H1 (cell line): ENCODE measurements at regions of chr1 and their contacts with region 1.

Region 1: GRCh38 chr1:44318097-44319088 is 36.7 kb downstream of the ERI3 start:
- DNase-seq: peak; percentile 54 to 74
- H3K4me3 ChIP-seq: no peak overlapping the region; a peak in 1 of 8 replicates
- H3K27ac ChIP-seq: no peak overlapping the region
- H3K4me1 ChIP-seq: peaks cover 7 to 18% (median 15%) of the 10 kb centered on the region in 4 experiments; a peak in 5 of 7 replicates
- H3K27me3 ChIP-seq: peaks cover 0 to 2% (median 0%) of the 10 kb centered on the region in 4 experiments; a peak in 1 of 7 replicates
- CTCF ChIP-seq: peak; percentile 45 to 82 (median 61)
- EP300 ChIP-seq: peak in 1 of 2 experiments; percentile 54; a peak in 1 of 3 replicates
- POLR2A ChIP-seq: no peak
- RAD21 ChIP-seq: peak; percentile 51; a peak in 3 of 4 replicates

Region 2: DNA sequence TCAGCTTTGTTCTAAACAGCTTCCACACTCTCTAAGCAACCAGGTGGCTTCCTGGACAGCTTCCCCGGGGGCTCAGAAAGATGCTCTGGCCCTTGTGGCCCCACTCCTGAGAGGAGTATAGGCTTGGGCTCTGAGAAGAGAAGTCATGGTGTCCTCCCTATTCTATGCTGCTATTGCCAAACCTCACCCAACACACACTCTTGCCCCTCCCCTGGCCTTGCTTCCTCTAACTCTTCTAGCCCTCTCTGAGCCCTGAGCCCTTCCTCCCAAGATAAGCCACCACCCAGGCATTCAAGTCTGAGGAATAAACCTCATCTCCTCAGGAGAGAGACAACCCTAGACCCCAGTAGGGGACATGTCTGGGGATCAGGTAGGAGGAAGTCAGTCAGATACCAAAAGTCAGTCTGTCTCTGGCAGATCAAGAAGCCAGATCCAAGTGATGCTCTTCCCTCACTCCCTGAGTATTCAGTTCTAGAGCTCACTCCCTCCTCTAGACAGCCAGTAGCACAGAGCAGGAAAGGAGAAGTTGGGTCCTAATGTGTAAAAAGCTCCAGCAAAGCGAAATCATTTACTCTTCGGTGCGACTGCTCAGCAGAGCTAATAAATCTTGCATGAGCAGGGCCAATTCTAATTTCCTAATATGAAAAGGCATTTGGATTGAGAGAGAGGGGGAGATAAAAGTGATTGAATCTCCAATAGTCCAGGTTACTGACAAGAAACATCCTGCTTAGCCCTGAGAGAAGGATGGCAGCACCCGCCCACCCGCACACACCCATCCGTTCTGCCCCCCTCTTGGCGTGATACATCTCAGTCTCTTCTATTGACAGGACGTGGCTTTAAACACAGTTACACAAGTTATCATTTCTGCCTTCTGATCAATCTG is 54.6 kb before region 1 on chr1:
- CTCF ChIA-PET with region 1: interaction called, 33 read pairs
- POLR2A ChIA-PET with region 1: no interaction called
- DNase-seq: no peak
- H3K4me3 ChIP-seq: no peak overlapping the region
- H3K27ac ChIP-seq: no peak overlapping the region
- H3K4me1 ChIP-seq: peaks cover 1 to 13% (median 8%) of the 10 kb centered on the region in 4 experiments; a peak in 5 of 7 replicates
- H3K27me3 ChIP-seq: no peaks in the 10 kb centered on the region
- CTCF ChIP-seq: no peak
- EP300 ChIP-seq: no peak
- POLR2A ChIP-seq: no peak
- RAD21 ChIP-seq: no peak

Region 3: DNA sequence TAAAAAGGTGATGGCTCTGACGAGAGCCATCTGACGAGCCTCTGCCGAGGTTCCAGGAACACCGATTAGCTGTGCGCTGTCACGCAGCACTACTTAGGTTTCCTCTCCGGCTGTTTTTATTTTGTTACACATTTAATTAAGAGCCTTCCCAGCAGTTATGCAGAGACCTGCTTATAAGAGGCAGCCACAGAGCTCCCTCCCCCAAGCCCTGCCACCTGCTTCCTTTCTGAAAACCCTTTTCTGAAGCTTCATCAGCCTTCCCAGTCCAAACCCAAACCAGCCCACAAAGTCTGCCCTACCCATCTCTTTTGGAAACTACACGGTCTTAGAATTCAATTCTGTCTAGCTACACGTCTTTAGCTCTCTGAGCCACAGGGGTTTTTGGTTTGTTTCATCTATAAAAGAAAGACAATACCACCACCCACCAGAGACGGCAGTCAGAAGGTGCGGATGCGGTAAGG is 12.4 kb before region 1 on chr1:
- CTCF ChIA-PET with region 1: interaction called, 12 read pairs
- POLR2A ChIA-PET with region 1: interaction called, 5 read pairs
- DNase-seq: no peak
- H3K4me3 ChIP-seq: no peak overlapping the region
- H3K27ac ChIP-seq: no peak overlapping the region
- H3K4me1 ChIP-seq: peaks cover 0 to 5% (median 0%) of the 10 kb centered on the region in 4 experiments; a peak in 3 of 7 replicates
- H3K27me3 ChIP-seq: no peaks in the 10 kb centered on the region
- CTCF ChIP-seq: no peak
- EP300 ChIP-seq: no peak
- POLR2A ChIP-seq: no peak
- RAD21 ChIP-seq: no peak

Region 4: DNA sequence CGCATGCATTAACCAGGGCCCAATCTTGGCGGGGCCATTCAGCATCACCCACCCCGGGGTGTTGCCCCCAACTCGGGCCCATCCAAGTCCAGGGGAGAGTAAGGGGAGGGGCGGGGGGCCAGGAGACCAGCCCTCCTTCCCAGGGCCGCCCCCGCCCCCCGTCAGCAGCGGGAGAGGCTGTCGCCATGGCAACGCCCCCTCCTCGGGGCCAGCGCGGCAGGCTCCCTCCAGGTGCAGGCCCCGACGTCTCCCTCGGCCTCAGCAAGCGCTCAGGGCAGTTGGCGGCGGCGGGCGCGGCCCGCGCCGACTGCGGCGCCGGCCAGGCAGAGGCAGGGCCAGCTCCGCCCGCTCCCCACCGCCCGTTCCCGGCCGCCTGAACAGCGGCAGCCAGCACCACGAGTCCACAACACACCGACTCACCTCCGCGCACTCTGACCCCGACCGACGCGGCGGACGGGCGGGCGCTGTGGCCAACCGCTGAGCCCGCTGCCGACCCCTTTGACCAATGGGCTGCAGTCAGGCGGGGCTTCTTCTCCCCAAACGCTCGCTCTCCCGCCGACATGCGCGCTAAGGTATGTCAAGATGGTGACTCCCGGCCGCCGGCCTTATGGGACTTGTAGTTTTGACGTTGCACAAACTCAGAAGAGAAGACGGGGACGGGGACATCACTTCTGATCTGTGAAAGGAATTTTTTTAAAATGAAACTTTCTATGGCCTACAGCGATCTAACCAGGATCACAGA is 36.6 kb after region 1 on chr1 and contains the start of gene ERI3:
- CTCF ChIA-PET with region 1: interaction called, 44 read pairs
- POLR2A ChIA-PET with region 1: no interaction called
- DNase-seq: peak; percentile 90 to 97
- H3K4me3 ChIP-seq: peak within 1 kb of the TSS; percentile 74 to 90 (median 82)
- H3K27ac ChIP-seq: peak within 1 kb of the TSS; percentile 77
- H3K4me1 ChIP-seq: peaks cover 0 to 15% (median 8%) of the 10 kb centered on the region in 4 experiments; a peak in 6 of 7 replicates
- H3K27me3 ChIP-seq: no peaks in the 10 kb centered on the region
- CTCF ChIP-seq: no peak
- EP300 ChIP-seq: no peak
- POLR2A ChIP-seq: peak; percentile 66 to 77
- RAD21 ChIP-seq: no peak
- total RNA-seq, gene ERI3: 81.1 and 85.7 TPM in 2 replicates